HepG2 (cell line): ENCODE measurements at regions of chr12 and their contacts with region 1.

Region 1: GRCh38 chr12:24948757-24949722 is at the start of gene BCAT1:
- DNase-seq: peak; percentile 61
- ATAC-seq: peak; percentile 93
- H3K4me3 ChIP-seq: peak within 1 kb of the TSS; percentile 84 to 94 (median 90)
- H3K27ac ChIP-seq: peak within 1 kb of the TSS; percentile 56
- H3K4me1 ChIP-seq: peaks cover 61% of the 10 kb centered on the region
- H3K27me3 ChIP-seq: peaks cover 0 to 7% of the 10 kb centered on the region in 2 experiments; a peak in 1 of 5 replicates
- CTCF ChIP-seq: peak; percentile 41
- EP300 ChIP-seq: no peak
- POLR2A ChIP-seq: peak; percentile 73 to 78
- RAD21 ChIP-seq: peak; percentile 65
- total RNA-seq, gene BCAT1: 75.5 and 142 TPM in 2 replicates

Region 2: DNA sequence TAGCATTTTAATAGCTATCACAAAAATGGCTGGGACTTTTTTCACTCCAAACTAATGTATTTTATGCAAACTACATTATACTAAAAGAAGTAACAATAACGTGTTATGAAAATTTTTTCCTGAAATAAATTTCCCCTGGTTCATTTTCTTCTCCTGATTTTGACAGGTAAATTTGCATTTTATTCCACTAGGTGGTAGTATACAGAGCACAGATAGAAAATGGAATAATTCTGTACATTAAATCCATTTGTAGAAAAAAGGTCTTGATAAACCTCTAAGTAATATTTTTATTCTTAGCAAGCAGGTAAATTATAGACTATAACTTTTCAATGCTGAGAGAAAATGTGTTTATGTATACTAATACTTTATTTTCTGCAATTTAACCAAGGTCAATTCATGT is 96.6 kb before region 1 on chr12:
- CTCF ChIA-PET with region 1: no interaction called
- POLR2A ChIA-PET with region 1: no interaction called
- in situ Hi-C with region 1: no loop called
- intact Hi-C with region 1: loop called (anchors 2 kb)
- DNase-seq: no peak
- ATAC-seq: no peak
- H3K4me3 ChIP-seq: no peak overlapping the region
- H3K27ac ChIP-seq: no peak overlapping the region
- H3K4me1 ChIP-seq: no peaks in the 10 kb centered on the region
- H3K27me3 ChIP-seq: no peaks in the 10 kb centered on the region
- CTCF ChIP-seq: no peak
- EP300 ChIP-seq: no peak
- POLR2A ChIP-seq: no peak
- RAD21 ChIP-seq: no peak

Region 3: GRCh38 chr12:24909667-24910066 is 39.4 kb before region 1 on chr12:
- CTCF ChIA-PET with region 1: no interaction called
- POLR2A ChIA-PET with region 1: interaction called, 8 read pairs
- in situ Hi-C with region 1: no loop called
- intact Hi-C with region 1: loop called (anchors 2 kb)
- DNase-seq: no peak
- ATAC-seq: no peak
- H3K4me3 ChIP-seq: no peak overlapping the region
- H3K27ac ChIP-seq: no peak overlapping the region
- H3K4me1 ChIP-seq: peaks cover 28% of the 10 kb centered on the region
- H3K27me3 ChIP-seq: no peaks in the 10 kb centered on the region
- CTCF ChIP-seq: no peak
- EP300 ChIP-seq: no peak
- POLR2A ChIP-seq: no peak
- RAD21 ChIP-seq: no peak

Region 4: DNA sequence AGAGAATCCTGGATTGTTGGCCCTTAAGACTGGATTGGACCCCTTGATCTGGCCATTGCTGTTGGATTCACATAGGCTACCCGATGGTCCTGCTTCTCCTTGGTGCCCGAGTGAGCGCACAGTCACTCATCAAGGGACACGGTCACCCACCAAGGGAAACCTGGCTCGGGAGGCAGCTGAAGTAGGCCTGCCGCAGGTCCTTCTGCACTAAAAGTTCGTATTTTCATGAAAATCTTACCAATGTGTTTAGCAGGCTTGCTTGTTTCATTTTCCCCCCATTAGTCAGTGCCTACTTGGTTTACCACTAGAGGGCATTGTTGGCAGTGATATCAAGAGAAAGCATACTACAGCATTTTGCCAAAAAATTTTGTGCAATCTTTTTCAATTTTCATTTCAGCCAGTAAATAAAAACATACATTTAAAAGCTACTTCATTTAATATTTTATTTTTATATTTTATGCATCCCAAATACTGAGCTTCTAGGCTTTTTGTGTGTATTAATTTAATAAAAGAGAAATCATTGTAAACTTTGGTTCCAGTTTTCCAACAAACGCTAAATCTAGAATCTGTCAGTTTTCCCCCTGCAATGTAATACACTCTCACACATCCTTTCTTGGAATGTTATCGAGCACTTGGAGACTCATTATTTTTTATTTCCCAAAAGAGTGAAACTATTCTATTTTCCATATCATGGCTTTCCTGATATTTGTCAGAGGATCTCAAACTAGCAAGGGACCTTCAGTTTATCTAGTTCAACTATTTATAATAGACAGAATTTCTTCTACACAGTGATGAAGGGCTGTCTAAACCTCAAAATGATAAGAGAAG is 487.4 kb after region 1 on chr12:
- CTCF ChIA-PET with region 1: no interaction called
- POLR2A ChIA-PET with region 1: no interaction called
- in situ Hi-C with region 1: no loop called
- intact Hi-C with region 1: no loop called
- DNase-seq: peak; percentile 49
- ATAC-seq: peak; percentile 84
- H3K4me3 ChIP-seq: peak overlapping the region; percentile 69 to 74 (median 71)
- H3K27ac ChIP-seq: no peak overlapping the region
- H3K4me1 ChIP-seq: no peaks in the 10 kb centered on the region
- H3K27me3 ChIP-seq: no peaks in the 10 kb centered on the region
- CTCF ChIP-seq: peak; percentile 81
- EP300 ChIP-seq: no peak
- POLR2A ChIP-seq: no peak
- RAD21 ChIP-seq: no peak; the same call in 1 of the 2 replicates